K562 (cell line): ENCODE measurements at regions of chr3 and their contacts with region 1.

Region 1: GRCh38 chr3:44323341-44323955 is 15.1 kb upstream of the TCAIM start:
- DNase-seq: peak; percentile 30 to 83 (median 47)
- ATAC-seq: peak; percentile 88
- H3K4me3 ChIP-seq: no peak overlapping the region
- H3K27ac ChIP-seq: no peak overlapping the region
- H3K4me1 ChIP-seq: no peaks in the 10 kb centered on the region
- H3K27me3 ChIP-seq: no peaks in the 10 kb centered on the region
- CTCF ChIP-seq: peak; percentile 74 to 96 (median 84)
- EP300 ChIP-seq: no peak; the same call in 1 of the 2 replicates
- POLR2A ChIP-seq: no peak
- RAD21 ChIP-seq: peak; percentile 87 to 97

Region 2: DNA sequence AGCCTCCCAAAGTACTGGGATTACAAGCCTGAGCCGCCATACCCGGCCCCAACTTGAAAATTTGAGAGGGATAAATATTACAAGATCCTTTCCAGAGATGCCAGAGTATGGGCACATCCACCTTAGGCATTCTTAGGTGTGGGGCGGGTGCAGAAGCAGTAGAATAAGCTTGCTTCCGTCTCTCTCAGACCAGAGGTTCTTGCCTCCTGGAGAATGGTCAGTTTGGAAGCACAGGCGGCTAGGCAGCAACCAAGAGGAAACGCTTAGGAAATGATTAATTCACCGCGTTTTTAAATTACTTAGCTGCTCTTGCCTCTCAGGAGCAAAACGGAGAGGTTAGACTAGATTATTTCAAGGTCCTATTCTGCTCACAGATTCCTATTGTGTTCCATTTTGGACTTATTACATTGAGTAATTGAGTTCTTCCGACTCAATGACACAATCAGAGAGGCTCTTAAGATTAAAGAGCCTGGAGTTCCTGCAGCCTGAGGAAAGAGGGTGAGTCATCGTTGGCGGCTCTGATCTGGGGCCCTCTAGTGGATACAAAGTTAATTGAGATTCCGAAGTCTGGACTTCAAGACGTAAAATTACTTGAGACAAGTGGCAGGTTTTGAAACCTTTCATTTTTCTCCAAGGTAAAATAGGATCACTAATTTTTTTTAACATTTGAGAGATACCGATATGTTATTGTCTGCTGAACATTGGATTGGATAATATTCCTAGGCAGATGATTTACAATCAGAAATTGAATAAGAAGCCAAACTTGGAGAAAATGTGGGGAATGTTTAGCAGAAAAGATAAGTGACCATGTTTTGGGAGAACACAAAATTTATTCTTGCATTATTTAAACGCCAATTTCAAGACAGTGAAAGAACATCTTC is 87.6 kb before region 1 on chr3:
- CTCF ChIA-PET with region 1: interaction called, 3 read pairs
- POLR2A ChIA-PET with region 1: no interaction called
- in situ Hi-C with region 1: no loop called
- intact Hi-C with region 1: loop called (anchors 5 kb)
- DNase-seq: peak; percentile 80 to 93 (median 84)
- ATAC-seq: peak; percentile 89
- H3K4me3 ChIP-seq: no peak overlapping the region
- H3K27ac ChIP-seq: peak overlapping the region; percentile 86
- H3K4me1 ChIP-seq: peaks cover 10 to 47% of the 10 kb centered on the region in 2 experiments
- H3K27me3 ChIP-seq: no peaks in the 10 kb centered on the region
- CTCF ChIP-seq: peak; percentile 73 to 91 (median 89)
- EP300 ChIP-seq: peak; percentile 67
- POLR2A ChIP-seq: 0 out of 2 replicates have a peak, but pooled peaks have one; percentile 12
- RAD21 ChIP-seq: peak; percentile 60 to 66

Region 3: GRCh38 chr3:44309500-44309899 is 13.9 kb before region 1 on chr3:
- CTCF ChIA-PET with region 1: no interaction called
- POLR2A ChIA-PET with region 1: no interaction called
- in situ Hi-C with region 1: no loop called
- intact Hi-C with region 1: no loop called
- DNase-seq: no peak
- ATAC-seq: peak; percentile 54; the same call in 2 of the 3 replicates
- H3K4me3 ChIP-seq: no peak overlapping the region
- H3K27ac ChIP-seq: no peak overlapping the region
- H3K4me1 ChIP-seq: no peaks in the 10 kb centered on the region
- H3K27me3 ChIP-seq: no peaks in the 10 kb centered on the region
- CTCF ChIP-seq: no peak
- EP300 ChIP-seq: no peak
- POLR2A ChIP-seq: no peak
- RAD21 ChIP-seq: no peak

Region 4: GRCh38 chr3:44516230-44516629 is 192.8 kb after region 1 on chr3:
- CTCF ChIA-PET with region 1: interaction called, 4 read pairs
- POLR2A ChIA-PET with region 1: no interaction called
- in situ Hi-C with region 1: loop called (anchors 10 kb)
- intact Hi-C with region 1: loop called (anchors 5 kb)
- DNase-seq: no peak
- ATAC-seq: no peak
- H3K4me3 ChIP-seq: no peak overlapping the region
- H3K27ac ChIP-seq: no peak overlapping the region
- H3K4me1 ChIP-seq: peaks cover 12 to 22% of the 10 kb centered on the region in 2 experiments
- H3K27me3 ChIP-seq: no peaks in the 10 kb centered on the region
- CTCF ChIP-seq: no peak
- EP300 ChIP-seq: no peak
- POLR2A ChIP-seq: no peak
- RAD21 ChIP-seq: no peak

Region 5: GRCh38 chr3:44624749-44625480 is 301.5 kb after region 1 on chr3 and contains the start of gene ZNF197:
- CTCF ChIA-PET with region 1: no interaction called
- POLR2A ChIA-PET with region 1: no interaction called
- in situ Hi-C with region 1: no loop called
- intact Hi-C with region 1: loop called (anchors 5 kb)
- DNase-seq: peak; percentile 92 to 97 (median 94)
- ATAC-seq: peak; percentile 98
- H3K4me3 ChIP-seq: peak within 1 kb of the TSS; percentile 57
- H3K27ac ChIP-seq: peak within 1 kb of the TSS; percentile 79
- H3K4me1 ChIP-seq: peaks cover 3 to 6% of the 10 kb centered on the region in 2 experiments; a peak in 3 of 5 replicates
- H3K27me3 ChIP-seq: no peaks in the 10 kb centered on the region
- CTCF ChIP-seq: peak in 2 of 3 experiments; percentile 8 to 32; a peak in 3 of 6 replicates
- EP300 ChIP-seq: 0 out of 2 replicates have a peak, but pooled peaks have one; percentile 24
- POLR2A ChIP-seq: peak; percentile 82
- RAD21 ChIP-seq: no peak; a peak in 1 of 4 replicates
- polyA plus RNA-seq, gene ZNF197: 3.5 to 3.8 TPM

Region 6: DNA sequence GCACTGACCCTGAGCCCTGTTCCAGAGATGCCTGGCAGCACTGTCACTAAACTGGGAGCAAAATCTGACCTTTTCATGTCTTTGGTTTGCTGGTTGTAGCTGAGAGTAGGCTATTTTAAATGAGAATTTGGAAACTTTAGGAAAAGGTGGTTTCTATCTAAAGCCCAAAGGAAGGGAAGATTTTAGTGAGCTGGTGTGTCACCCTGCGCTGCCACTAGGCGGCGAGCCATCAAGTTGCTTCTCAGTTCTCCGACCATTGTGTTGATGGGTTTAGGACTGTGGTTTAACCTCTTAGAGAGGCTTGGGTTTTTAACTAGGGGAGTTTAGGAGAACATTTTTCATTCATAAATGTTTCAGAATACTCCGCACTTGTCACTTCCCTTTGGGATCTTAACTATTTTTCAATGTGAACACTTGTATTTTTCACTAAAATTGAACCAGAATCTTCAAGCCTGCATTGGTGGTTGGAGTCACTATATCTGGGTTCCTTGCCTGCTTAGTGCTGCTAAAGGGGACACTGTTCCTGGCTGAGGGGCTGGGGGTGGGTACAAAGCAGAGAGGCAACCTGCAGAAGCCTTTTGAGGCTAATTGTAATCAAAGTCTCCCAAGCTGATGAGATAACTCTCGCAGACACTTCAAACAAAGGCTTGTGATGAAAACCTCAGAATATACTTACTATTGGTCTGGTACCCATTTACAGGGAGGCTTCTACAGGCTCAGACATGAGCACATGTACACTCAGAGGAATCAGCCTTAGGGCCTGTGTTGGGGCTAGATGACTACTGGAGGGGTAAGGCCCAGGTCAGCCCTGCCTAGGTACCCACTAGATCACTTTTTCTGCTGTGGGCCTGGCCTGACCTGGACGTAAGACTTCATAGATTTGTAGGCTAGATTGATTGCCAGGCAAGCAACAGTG is 669.4 kb after region 1 on chr3:
- CTCF ChIA-PET with region 1: no interaction called
- POLR2A ChIA-PET with region 1: no interaction called
- in situ Hi-C with region 1: no loop called
- intact Hi-C with region 1: loop called (anchors 10 kb)
- DNase-seq: peak; percentile 62 to 67 (median 64)
- ATAC-seq: peak; percentile 91
- H3K4me3 ChIP-seq: no peak overlapping the region
- H3K27ac ChIP-seq: no peak overlapping the region
- H3K4me1 ChIP-seq: no peaks in the 10 kb centered on the region; a peak in 1 of 5 replicates
- H3K27me3 ChIP-seq: no peaks in the 10 kb centered on the region
- CTCF ChIP-seq: peak; percentile 85 to 98 (median 90)
- EP300 ChIP-seq: no peak
- POLR2A ChIP-seq: no peak
- RAD21 ChIP-seq: peak; percentile 44 to 50

Region 7: DNA sequence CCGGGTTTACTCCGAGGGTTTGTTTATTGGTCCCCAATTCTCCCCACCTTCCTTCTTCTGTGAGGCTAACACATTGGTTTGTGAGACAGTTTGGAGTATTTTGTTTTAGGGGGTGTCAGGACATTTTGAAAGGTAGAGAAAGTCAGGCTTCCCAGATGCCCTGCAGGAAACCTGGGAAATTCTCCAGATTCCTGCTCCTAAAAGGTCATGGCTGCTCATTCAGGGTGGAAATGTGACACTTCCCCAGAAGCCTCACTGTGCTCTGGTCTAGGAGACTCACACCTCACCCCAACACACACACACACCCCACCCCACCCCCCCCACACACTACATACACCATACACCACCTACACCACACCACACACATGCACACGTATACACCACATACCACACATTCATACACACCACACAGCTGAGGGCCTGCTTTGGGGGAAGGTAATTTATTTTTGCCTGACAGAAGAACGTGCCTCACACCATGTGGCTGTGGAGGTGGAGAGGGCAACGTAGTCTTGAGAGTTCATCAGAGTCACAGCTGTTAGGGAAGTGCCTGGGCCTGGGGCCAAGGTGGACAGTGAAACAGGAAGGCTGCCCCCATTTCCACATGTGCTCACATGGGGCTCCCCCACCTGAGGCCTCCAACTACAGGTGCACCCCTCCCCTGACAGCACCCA is 1230.7 kb after region 1 on chr3:
- CTCF ChIA-PET with region 1: no interaction called
- POLR2A ChIA-PET with region 1: no interaction called
- in situ Hi-C with region 1: no loop called
- intact Hi-C with region 1: no loop called
- DNase-seq: peak in 3 of 4 experiments; percentile 26 to 71 (median 43)
- ATAC-seq: peak; percentile 7; the same call in 1 of the 3 replicates
- H3K4me3 ChIP-seq: no peak overlapping the region
- H3K27ac ChIP-seq: no peak overlapping the region
- H3K4me1 ChIP-seq: peaks cover 35 to 47% of the 10 kb centered on the region in 2 experiments
- H3K27me3 ChIP-seq: no peaks in the 10 kb centered on the region
- CTCF ChIP-seq: no peak
- EP300 ChIP-seq: no peak
- POLR2A ChIP-seq: no peak
- RAD21 ChIP-seq: no peak